ENCODE measurements at regions of chr15 and their contacts with region 1.

Region 1: GRCh38 chr15:37007301-37007700 is 93.0 kb downstream of the MEIS2 start:
- DNase-seq: no peak
- ATAC-seq: peak; percentile 52; the same call in 2 of the 3 replicates
- H3K4me3 ChIP-seq: no peak overlapping the region
- H3K27ac ChIP-seq: no peak overlapping the region
- H3K4me1 ChIP-seq: no peaks in the 10 kb centered on the region
- H3K27me3 ChIP-seq: no peaks in the 10 kb centered on the region
- CTCF ChIP-seq: no peak
- EP300 ChIP-seq: no peak
- POLR2A ChIP-seq: no peak
- RAD21 ChIP-seq: no peak

Region 2: GRCh38 chr15:36517758-36518157 is 489.5 kb before region 1 on chr15:
- CTCF ChIA-PET with region 1: no interaction called
- POLR2A ChIA-PET with region 1: no interaction called
- RAD21 ChIA-PET with region 1: no interaction called
- SMC1A ChIA-PET with region 1: no interaction called
- in situ Hi-C with region 1: no loop called
- intact Hi-C with region 1: no loop called
- DNase-seq: no peak
- ATAC-seq: peak; percentile 80
- H3K4me3 ChIP-seq: no peak overlapping the region
- H3K27ac ChIP-seq: no peak overlapping the region
- H3K4me1 ChIP-seq: no peaks in the 10 kb centered on the region
- H3K27me3 ChIP-seq: no peaks in the 10 kb centered on the region
- CTCF ChIP-seq: no peak
- EP300 ChIP-seq: no peak
- POLR2A ChIP-seq: no peak
- RAD21 ChIP-seq: no peak

Region 3: DNA sequence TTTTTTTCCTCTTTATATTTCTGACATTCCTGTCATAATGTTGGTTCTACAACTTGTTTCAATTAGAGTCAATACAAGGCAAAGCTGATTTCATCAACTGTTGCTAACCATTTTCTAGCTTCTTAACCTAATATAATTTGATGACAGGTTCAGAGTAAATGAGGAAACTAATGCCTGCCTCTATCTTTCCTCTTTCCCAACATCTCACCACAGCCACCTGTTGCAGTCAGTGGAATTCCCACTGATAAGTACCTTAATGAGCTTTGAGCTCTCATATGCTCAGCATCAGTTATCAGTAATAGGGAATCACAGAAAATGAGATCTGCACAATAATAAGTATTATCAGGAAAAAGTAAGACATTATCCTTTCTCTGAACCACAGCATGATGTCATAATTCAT is 148.9 kb before region 1 on chr15:
- CTCF ChIA-PET with region 1: no interaction called
- POLR2A ChIA-PET with region 1: no interaction called
- RAD21 ChIA-PET with region 1: no interaction called
- SMC1A ChIA-PET with region 1: no interaction called
- in situ Hi-C with region 1: no loop called
- intact Hi-C with region 1: no loop called
- DNase-seq: no peak
- ATAC-seq: no peak
- H3K4me3 ChIP-seq: no peak overlapping the region
- H3K27ac ChIP-seq: no peak overlapping the region
- H3K4me1 ChIP-seq: no peaks in the 10 kb centered on the region
- H3K27me3 ChIP-seq: no peaks in the 10 kb centered on the region
- CTCF ChIP-seq: no peak
- EP300 ChIP-seq: no peak
- POLR2A ChIP-seq: no peak
- RAD21 ChIP-seq: no peak

Region 4: GRCh38 chr15:36988947-36989346 is 18.4 kb before region 1 on chr15:
- CTCF ChIA-PET with region 1: no interaction called
- POLR2A ChIA-PET with region 1: no interaction called
- RAD21 ChIA-PET with region 1: no interaction called
- SMC1A ChIA-PET with region 1: interaction called, 13 read pairs
- in situ Hi-C with region 1: no loop called
- intact Hi-C with region 1: no loop called
- DNase-seq: no peak
- ATAC-seq: no peak
- H3K4me3 ChIP-seq: no peak overlapping the region
- H3K27ac ChIP-seq: no peak overlapping the region
- H3K4me1 ChIP-seq: no peaks in the 10 kb centered on the region
- H3K27me3 ChIP-seq: no peaks in the 10 kb centered on the region
- CTCF ChIP-seq: no peak
- EP300 ChIP-seq: no peak
- POLR2A ChIP-seq: no peak
- RAD21 ChIP-seq: no peak

Region 5: DNA sequence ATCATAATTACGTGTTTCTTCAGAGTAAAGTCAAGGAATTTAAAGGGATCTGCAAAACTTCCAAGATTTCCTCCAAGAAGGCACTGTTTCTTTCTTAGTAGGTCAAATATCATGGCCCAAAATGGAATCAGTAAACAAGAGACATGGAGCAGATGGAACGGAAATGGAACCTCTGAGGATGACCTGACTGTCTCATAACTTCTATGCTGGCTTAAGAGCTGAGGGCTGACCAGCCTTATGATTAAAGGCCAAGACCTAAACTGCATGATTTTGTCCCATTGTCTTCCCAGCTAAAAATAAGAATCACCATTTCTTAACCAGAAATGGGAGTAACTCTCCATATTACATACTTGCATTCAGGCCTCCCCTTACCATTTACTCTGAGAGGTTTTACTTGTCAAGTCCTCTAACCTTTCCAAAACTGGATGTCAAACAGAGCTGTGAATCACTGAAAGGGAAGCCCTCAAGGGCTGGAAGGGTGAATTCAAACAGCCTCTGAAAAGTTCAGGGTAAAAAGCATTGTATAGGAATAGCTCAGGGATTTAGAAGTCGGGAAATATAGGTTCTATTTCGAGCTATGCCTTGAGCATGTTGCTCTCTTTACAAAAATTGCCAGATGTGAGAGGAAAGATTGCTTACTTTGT is 10.6 kb before region 1 on chr15:
- CTCF ChIA-PET with region 1: interaction called, 10 read pairs
- POLR2A ChIA-PET with region 1: no interaction called
- RAD21 ChIA-PET with region 1: no interaction called
- SMC1A ChIA-PET with region 1: interaction called, 14 read pairs
- in situ Hi-C with region 1: no loop called
- intact Hi-C with region 1: no loop called
- DNase-seq: no peak
- ATAC-seq: no peak
- H3K4me3 ChIP-seq: no peak overlapping the region
- H3K27ac ChIP-seq: no peak overlapping the region
- H3K4me1 ChIP-seq: no peaks in the 10 kb centered on the region
- H3K27me3 ChIP-seq: no peaks in the 10 kb centered on the region
- CTCF ChIP-seq: no peak
- EP300 ChIP-seq: no peak
- POLR2A ChIP-seq: no peak
- RAD21 ChIP-seq: no peak

Region 6: DNA sequence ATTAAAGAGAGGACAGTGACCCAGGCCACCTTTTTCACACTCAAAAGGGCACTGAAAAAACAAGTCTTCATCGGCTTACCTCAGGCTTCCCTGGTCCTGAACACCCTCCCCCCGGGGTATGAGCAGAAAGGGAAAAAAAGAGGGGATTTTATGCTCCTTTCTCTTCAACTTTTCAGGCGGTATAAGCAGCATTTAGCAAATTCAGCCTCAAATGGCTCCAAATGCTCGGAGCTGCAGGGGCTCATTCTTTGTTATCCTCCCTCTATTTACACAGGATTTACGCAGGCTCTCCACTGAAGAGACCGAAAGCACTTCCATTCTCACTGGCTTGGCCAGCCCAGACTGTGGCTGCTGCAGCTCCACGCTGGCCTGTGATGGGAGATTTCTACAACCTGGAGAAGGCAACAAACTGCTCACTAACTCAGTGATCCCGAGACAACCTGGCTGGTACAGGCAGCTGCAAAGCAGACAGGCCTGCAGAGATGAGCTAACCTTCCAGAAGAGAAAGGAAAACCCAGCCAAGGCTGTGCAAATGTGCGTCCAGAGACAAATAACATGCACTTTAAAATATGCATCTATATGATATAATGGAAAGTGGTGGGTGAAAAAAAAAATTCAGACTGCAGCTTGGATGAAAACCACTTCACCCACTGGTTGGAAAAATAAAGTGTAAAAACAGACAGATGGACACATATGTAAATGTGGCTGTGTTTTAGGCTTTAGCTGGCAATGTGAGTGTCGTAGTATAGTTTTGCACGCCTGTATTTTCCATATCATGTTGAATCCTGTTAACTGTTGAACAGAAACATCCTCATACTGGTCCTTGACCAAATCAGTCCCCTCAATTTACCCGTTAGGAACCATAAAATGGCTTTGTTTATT is 38.8 kb after region 1 on chr15:
- CTCF ChIA-PET with region 1: no interaction called
- POLR2A ChIA-PET with region 1: no interaction called
- RAD21 ChIA-PET with region 1: no interaction called
- SMC1A ChIA-PET with region 1: no interaction called
- in situ Hi-C with region 1: no loop called
- intact Hi-C with region 1: no loop called
- DNase-seq: no peak
- ATAC-seq: no peak; the same call in 2 of the 3 replicates
- H3K4me3 ChIP-seq: no peak overlapping the region
- H3K27ac ChIP-seq: no peak overlapping the region
- H3K4me1 ChIP-seq: no peaks in the 10 kb centered on the region
- H3K27me3 ChIP-seq: no peaks in the 10 kb centered on the region
- CTCF ChIP-seq: no peak
- EP300 ChIP-seq: no peak
- POLR2A ChIP-seq: no peak
- RAD21 ChIP-seq: no peak

Region 7: GRCh38 chr15:38054488-38054887 is 1047.2 kb after region 1 on chr15:
- CTCF ChIA-PET with region 1: no interaction called
- POLR2A ChIA-PET with region 1: no interaction called
- RAD21 ChIA-PET with region 1: no interaction called
- SMC1A ChIA-PET with region 1: no interaction called
- in situ Hi-C with region 1: no loop called
- intact Hi-C with region 1: no loop called
- DNase-seq: no peak
- ATAC-seq: no peak
- H3K4me3 ChIP-seq: no peak overlapping the region
- H3K27ac ChIP-seq: no peak overlapping the region
- H3K4me1 ChIP-seq: peaks cover 4% of the 10 kb centered on the region; the same call in 1 of the 2 replicates
- H3K27me3 ChIP-seq: no peaks in the 10 kb centered on the region
- CTCF ChIP-seq: no peak
- EP300 ChIP-seq: no peak
- POLR2A ChIP-seq: no peak
- RAD21 ChIP-seq: no peak

Measured in GM12878 (cell line).